Activated CD8-positive, alpha-beta T cell treated with anti-CD3 and anti-CD28 coated beads, Interleukin-2, amount 10 ng/mL, durations not matched to agents 7 days and 5 days (primary cell): ENCODE measurements at regions of chr17 and their contacts with region 1.

Region 1: GRCh38 chr17:35119368-35120165 is at the start of gene RAD51D:
- DNase-seq: peak; percentile 85
- ATAC-seq: peak; percentile 92
- H3K4me3 Mint-ChIP-seq: peak within 1 kb of the TSS; percentile 91
- H3K27ac Mint-ChIP-seq: peak within 1 kb of the TSS; percentile 95
- H3K4me1 Mint-ChIP-seq: peaks cover 29% of the 10 kb centered on the region
- H3K27me3 Mint-ChIP-seq: no peaks in the 10 kb centered on the region
- total RNA-seq, gene RAD51D: 32.1 to 33.6 TPM

Region 2: DNA sequence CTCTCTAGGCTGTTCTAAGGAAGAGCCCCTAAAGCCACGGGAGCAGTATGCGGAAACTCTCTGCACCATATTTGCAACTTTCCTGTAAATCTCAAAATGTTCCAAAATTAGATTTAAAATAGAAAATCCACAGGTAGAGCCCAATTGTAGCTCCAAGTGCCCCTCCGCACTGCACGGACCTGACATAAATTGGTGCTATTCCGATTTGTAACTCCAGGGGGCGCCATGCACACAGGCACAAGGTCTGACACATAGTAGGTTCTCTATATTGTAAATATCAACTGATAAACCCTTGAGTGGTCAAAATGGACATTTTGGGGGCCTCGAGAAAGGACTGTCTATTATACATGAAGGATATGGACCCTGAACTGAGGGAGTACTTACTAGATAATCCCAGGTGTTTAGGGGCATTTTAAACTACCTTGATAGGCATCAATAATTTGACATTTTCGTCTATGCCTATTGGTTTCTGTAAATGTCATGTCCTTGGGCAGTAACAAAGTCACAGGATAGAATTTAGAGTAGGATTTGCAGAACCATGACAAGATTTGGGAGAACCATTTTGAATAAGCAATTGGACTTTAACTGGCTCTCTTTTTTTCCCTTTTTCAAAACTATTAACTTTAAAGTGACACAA is 576.7 kb before region 1 on chr17:
- CTCF ChIA-PET with region 1: interaction called, 24 read pairs
- POLR2A ChIA-PET with region 1: no interaction called
- DNase-seq: peak; percentile 59
- ATAC-seq: peak; percentile 49
- H3K4me3 Mint-ChIP-seq: no peak overlapping the region
- H3K27ac Mint-ChIP-seq: no peak overlapping the region
- H3K4me1 Mint-ChIP-seq: no peaks in the 10 kb centered on the region
- H3K27me3 Mint-ChIP-seq: peaks cover 28% of the 10 kb centered on the region

Region 3: GRCh38 chr17:34980681-34981537 is 138.7 kb before region 1 on chr17:
- CTCF ChIA-PET with region 1: interaction called, 30 read pairs
- POLR2A ChIA-PET with region 1: interaction called, 4 read pairs
- DNase-seq: peak; percentile 85
- ATAC-seq: peak; percentile 89
- H3K4me3 Mint-ChIP-seq: peak overlapping the region; percentile 79
- H3K27ac Mint-ChIP-seq: peak overlapping the region; percentile 85
- H3K4me1 Mint-ChIP-seq: peaks cover 32% of the 10 kb centered on the region
- H3K27me3 Mint-ChIP-seq: no peaks in the 10 kb centered on the region

Region 4: GRCh38 chr17:34998205-34998604 is 121.4 kb before region 1 on chr17:
- CTCF ChIA-PET with region 1: interaction called, 118 read pairs
- POLR2A ChIA-PET with region 1: interaction called, 7 read pairs
- DNase-seq: peak; percentile 84
- ATAC-seq: peak; percentile 95
- H3K4me3 Mint-ChIP-seq: no peak overlapping the region
- H3K27ac Mint-ChIP-seq: peak overlapping the region; percentile 30
- H3K4me1 Mint-ChIP-seq: peaks cover 11% of the 10 kb centered on the region
- H3K27me3 Mint-ChIP-seq: no peaks in the 10 kb centered on the region

Region 5: DNA sequence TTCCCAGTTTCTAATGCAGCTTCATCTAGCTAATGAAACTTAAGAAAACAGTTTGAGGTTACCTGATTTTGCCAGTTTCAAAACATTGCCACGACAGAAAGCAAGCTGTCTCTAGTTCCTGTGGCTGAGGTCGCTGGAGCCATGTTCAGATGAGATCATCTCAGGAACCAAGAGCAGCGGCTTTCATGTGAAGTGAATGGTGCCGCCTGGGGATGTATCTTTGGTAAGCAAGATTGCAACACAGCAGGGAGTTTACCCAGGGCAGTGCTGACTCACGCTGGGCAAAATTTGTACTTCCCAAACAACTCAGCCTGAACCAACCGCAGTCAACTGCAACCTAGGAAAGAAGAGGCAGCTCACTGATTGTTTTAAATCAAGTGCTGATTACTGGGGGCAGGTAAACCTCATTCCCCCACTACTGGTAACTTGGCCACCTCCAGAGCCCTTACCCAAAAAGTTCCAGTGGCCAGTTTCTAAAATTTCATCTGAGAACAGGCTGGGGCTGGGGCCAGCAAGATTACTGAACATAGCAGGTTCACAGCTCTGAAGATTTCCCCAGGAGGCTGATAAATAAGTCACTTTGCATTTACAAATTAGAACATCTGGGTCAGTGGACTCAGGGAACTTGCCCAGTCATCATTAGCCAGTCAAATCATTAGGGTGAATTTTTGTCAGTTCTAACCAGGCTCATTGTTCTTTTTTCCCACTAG is 55.9 kb before region 1 on chr17 and contains the start of gene RFFL:
- CTCF ChIA-PET with region 1: interaction called, 15 read pairs
- POLR2A ChIA-PET with region 1: interaction called, 6 read pairs
- DNase-seq: peak; percentile 92
- ATAC-seq: peak; percentile 99
- H3K4me3 Mint-ChIP-seq: peak within 1 kb of the TSS; percentile 48
- H3K27ac Mint-ChIP-seq: peak within 1 kb of the TSS; percentile 85
- H3K4me1 Mint-ChIP-seq: peaks cover 49% of the 10 kb centered on the region
- H3K27me3 Mint-ChIP-seq: no peaks in the 10 kb centered on the region
- total RNA-seq, gene RFFL: 26.4 to 29.1 TPM

Region 6: GRCh38 chr17:35088881-35089585 is 30.5 kb before region 1 on chr17:
- CTCF ChIA-PET with region 1: interaction called, 26 read pairs
- POLR2A ChIA-PET with region 1: interaction called, 4 read pairs
- DNase-seq: peak; percentile 91
- ATAC-seq: peak; percentile 86
- H3K4me3 Mint-ChIP-seq: peak overlapping the region; percentile 88
- H3K27ac Mint-ChIP-seq: peak overlapping the region; percentile 95
- H3K4me1 Mint-ChIP-seq: peaks cover 45% of the 10 kb centered on the region
- H3K27me3 Mint-ChIP-seq: no peaks in the 10 kb centered on the region

Region 7: DNA sequence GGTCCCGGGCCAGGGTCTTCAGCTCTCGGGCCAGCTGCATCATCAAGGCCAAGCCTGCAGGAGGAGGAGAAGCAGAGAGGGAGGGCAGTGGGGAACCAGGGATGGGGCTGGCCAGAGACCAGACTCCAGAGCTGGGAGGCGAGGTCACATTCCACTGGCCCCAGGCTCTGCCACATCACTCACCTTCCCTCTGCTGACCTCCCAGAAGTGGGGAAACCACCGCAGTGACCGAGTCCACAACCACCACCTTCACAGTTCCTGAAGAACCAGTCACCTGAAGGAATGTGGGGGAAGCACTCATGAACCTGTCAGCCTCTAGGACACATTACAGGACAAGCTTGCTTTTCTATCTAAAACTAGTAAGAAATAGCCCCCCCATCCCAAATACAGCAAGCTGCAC is 16.3 kb before region 1 on chr17:
- CTCF ChIA-PET with region 1: interaction called, 19 read pairs
- POLR2A ChIA-PET with region 1: interaction called, 3 read pairs
- DNase-seq: no peak
- ATAC-seq: no peak
- H3K4me3 Mint-ChIP-seq: no peak overlapping the region
- H3K27ac Mint-ChIP-seq: no peak overlapping the region
- H3K4me1 Mint-ChIP-seq: no peaks in the 10 kb centered on the region
- H3K27me3 Mint-ChIP-seq: no peaks in the 10 kb centered on the region